Activated T-helper 1 cell treated with anti-CD3 and anti-CD28 coated beads, Interleukin-12 subunit alpha, Interleukin-12 subunit beta, Interleukin-2, Interleukin-4 antibody, amounts not matched to agents 30 ng/mL and 10 ng/mL and 1 ng/mL, durations not matched to agents 14 hours and 24 hours and 36 hours (primary cell): ENCODE measurements at regions of chr11 and their contacts with region 1.

Region 1: DNA sequence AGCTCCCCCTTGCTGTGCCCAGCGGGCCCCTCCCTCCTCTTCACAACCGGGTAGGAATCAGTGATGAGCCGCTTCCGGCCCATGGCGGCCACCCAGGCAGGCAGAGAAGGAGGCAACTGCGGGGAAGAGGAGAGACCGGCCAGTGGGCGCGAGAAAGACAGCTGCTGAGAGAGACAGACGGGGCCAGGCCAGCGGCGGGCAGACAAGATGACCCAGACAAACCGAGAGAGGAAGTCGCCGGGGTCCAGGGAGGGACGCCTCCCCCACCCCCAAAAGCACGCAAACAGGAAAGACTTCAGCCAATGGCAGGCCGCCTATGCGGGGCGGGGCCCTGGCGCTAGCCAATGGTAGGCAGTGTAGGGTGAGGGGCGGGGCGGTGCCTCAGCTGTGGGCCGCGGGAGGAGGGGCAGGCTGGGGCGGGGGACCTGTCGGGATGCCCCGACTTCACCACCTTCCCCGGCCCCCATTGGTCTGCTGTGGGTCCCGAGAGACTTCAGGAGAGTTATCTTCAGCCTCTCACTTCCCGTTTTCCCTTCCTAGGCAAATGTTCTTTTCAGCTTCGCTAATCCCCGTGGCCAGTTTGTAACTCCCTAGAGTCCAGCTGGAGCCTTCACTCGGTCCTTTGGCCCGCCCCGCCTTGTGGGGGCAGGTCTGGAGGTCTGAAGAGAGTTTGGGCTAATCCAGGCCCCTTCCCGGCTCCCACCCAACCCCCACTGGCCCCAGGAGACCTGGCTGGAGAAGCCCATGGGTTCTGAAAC is at the start of gene POLD4:
- DNase-seq: peak; percentile 95
- H3K4me3 Mint-ChIP-seq: peak within 1 kb of the TSS; percentile 94
- H3K27ac Mint-ChIP-seq: peak within 1 kb of the TSS; percentile 98
- H3K4me1 Mint-ChIP-seq: peaks cover 34% of the 10 kb centered on the region
- H3K27me3 Mint-ChIP-seq: peaks cover 1% of the 10 kb centered on the region
- total RNA-seq, gene POLD4: 36.7 and 39.8 TPM in 2 replicates

Region 2: GRCh38 chr11:66958232-66958955 is 395.1 kb before region 1 on chr11 and contains the start of gene PC:
- intact Hi-C with region 1: loop called (anchors 2 kb)
- DNase-seq: peak; percentile 97
- H3K4me3 Mint-ChIP-seq: peak within 1 kb of the TSS; percentile 83
- H3K27ac Mint-ChIP-seq: peak within 1 kb of the TSS; percentile 90
- H3K4me1 Mint-ChIP-seq: peaks cover 29% of the 10 kb centered on the region
- H3K27me3 Mint-ChIP-seq: peaks cover 16% of the 10 kb centered on the region
- total RNA-seq, gene PC: 11.2 and 15.9 TPM in 2 replicates

Region 3: DNA sequence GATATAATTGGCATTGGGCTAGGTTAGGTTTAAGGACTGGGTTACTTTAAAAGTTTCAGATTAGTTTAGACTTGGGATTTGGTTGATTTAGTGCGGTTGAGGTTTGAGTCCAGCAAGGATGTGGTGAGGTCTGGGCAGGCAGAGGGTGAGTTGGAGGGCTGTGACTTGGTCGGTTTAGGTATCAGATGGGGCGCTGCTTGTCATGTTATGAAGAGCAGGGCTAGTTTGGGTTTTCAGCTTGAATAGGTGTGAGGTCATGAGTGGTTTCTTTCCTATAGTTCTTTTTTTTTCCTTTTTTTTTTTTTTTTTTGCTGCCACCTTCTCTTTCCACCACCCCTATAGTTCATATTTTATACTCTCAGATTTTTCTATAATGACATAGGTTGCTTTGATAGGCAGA is 15.1 kb after region 1 on chr11:
- intact Hi-C with region 1: loop called (anchors 1 kb)
- DNase-seq: no peak
- H3K4me3 Mint-ChIP-seq: no peak overlapping the region
- H3K27ac Mint-ChIP-seq: no peak overlapping the region
- H3K4me1 Mint-ChIP-seq: peaks cover 21% of the 10 kb centered on the region
- H3K27me3 Mint-ChIP-seq: peaks cover 48% of the 10 kb centered on the region

Region 4: GRCh38 chr11:67382276-67383136 is 29.0 kb after region 1 on chr11:
- intact Hi-C with region 1: loop called (anchors 1 kb)
- DNase-seq: peak; percentile 74
- H3K4me3 Mint-ChIP-seq: no peak overlapping the region
- H3K27ac Mint-ChIP-seq: no peak overlapping the region
- H3K4me1 Mint-ChIP-seq: peaks cover 5% of the 10 kb centered on the region
- H3K27me3 Mint-ChIP-seq: peaks cover 38% of the 10 kb centered on the region

Region 5: GRCh38 chr11:67468835-67469811 is 115.6 kb after region 1 on chr11 and contains the start of gene TMEM134:
- intact Hi-C with region 1: loop called (anchors 5 kb)
- DNase-seq: peak; percentile 88
- H3K4me3 Mint-ChIP-seq: peak within 1 kb of the TSS; percentile 91
- H3K27ac Mint-ChIP-seq: peak within 1 kb of the TSS; percentile 84
- H3K4me1 Mint-ChIP-seq: peaks cover 21% of the 10 kb centered on the region
- H3K27me3 Mint-ChIP-seq: no peaks in the 10 kb centered on the region
- total RNA-seq, gene TMEM134: 55.1 and 61.4 TPM in 2 replicates

Region 6: DNA sequence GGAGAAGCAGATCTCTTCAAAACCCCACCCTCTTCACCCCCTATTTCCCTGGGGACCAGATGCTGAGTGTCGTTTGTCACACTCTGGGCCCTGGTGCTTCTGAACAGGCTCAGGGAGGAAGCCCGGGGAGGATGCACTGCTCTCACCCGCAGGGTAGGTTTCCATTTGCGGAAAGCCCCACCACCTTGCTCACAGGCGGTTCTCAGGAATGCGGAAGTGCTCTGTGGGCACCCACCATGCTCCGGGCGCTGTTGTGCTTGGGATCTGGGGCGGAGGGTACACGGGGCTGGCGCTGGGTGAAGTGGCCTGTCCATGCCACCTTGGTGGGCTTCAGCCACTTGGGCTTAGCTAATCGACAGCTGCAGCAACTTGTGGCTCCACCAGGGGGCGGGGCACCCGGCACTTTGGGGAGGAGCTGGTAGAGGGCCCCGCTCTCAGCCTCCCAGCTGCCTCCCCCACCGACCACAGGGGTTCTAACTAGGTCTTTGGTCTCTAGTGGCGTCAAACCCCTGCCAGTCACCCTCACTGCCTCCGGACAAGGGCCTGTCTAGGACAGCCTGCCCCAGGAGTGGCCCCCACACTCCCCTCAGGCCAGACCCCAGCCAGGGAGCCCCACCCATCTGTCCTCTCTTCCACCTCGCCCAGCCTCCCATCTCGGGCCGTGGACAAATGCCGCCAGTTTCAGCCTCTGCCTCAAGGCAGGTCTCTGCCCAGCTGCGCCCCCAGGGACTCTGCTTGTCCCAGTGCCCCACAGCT is 260.6 kb after region 1 on chr11:
- intact Hi-C with region 1: loop called (anchors 1 kb)
- DNase-seq: peak; percentile 86
- H3K4me3 Mint-ChIP-seq: peak overlapping the region; percentile 79
- H3K27ac Mint-ChIP-seq: peak overlapping the region; percentile 98
- H3K4me1 Mint-ChIP-seq: peaks cover 29% of the 10 kb centered on the region
- H3K27me3 Mint-ChIP-seq: no peaks in the 10 kb centered on the region